Colonic mucosa (tissue), 4 donors: ENCODE measurements at regions of chr14 and their contacts with region 1.

Region 1: GRCh38 chr14:34300882-34301734 is 160.9 kb downstream of the SPTSSA start:
- DNase-seq: peak; percentile 37
- H3K4me3 ChIP-seq: no peak overlapping the region
- H3K27ac ChIP-seq: no peak overlapping the region
- H3K4me1 ChIP-seq: no peaks in the 10 kb centered on the region
- H3K27me3 ChIP-seq: no peaks in the 10 kb centered on the region
- CTCF ChIP-seq: peak; percentile 51

Region 2: DNA sequence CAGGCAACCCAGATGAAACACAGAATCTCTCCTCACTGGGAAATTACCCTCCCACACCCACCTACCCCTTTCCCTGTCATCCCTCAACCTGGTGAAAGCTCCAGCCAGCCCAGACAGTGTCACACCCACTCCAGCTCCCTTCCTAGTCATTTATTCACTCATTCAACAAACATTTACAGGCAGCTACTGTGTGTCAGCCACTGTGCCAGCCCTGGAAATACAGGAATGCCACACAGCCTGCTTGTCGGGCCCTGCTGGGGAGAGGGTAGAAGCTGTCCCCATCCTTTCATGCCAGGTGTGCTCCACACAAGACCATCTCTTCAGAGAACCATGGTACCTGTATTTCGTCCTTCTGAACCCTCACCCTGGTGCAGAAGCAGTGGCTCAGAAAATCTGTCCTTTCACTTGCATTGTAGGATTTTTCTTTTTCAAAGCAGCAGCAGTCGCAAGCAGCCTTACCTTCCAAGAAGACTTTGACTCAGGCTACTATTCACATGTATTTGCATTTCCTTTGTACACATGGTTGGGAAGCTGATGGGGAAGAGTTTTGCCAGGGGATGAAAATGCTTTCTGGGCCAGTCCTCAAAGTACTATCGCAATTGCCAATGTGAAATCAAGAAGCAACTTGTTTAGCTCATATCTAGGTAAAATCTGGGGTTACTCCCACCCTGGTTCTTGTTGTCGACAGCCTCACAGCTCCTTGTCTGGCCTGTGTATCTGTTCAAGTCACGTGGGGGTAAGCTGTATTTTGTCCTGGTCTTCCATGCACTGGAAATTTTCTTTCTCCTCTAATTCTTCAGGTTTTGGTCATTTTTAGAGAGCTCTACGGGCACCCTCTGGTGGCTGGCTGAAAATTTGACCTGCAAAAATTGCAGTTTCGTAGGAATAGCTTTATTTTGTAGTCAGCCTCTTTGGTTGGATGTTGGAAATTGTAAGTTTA is 202.8 kb before region 1 on chr14:
- intact Hi-C with region 1: loop called (anchors 10 kb)
- DNase-seq: peak; percentile 48
- H3K4me3 ChIP-seq: no peak overlapping the region
- H3K27ac ChIP-seq: no peak overlapping the region
- H3K4me1 ChIP-seq: peaks cover 4% of the 10 kb centered on the region
- H3K27me3 ChIP-seq: no peaks in the 10 kb centered on the region
- CTCF ChIP-seq: peak; percentile 35